K562 (cell line): ENCODE measurements at regions of chr5 and their contacts with region 1.

Region 1: DNA sequence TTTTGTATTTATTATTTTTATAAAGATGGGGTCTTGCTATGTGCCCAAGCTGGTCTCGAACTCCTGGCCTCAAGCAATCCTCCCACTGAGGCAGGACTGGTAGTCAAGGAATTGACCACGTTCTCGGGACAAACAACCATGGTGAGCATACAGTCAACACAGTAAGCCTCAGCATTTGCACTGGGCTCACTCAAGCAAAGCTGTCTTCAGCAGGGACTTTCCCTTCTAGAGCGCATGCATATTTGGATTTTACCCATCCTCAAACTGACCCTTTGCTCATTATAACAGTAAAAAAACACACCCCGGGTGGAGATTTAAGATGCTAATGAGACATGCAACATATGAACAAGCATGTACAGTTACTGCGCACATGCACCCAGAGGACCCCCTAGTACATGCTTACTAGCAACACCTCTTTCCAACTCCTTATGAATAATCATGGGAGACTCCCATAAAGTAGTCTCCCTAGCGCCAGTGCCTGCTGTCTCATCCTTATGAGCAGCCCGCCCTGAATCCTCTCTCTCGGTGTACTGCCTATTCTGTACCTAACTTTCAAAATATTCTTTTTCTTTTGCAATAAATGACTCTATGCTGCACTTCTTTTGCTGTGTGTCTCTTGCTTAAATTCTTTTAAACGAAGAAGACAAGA is 41.5 kb downstream of the C5orf22 start:
- DNase-seq: no peak
- ATAC-seq: no peak
- H3K4me3 ChIP-seq: no peak overlapping the region
- H3K27ac ChIP-seq: no peak overlapping the region
- H3K4me1 ChIP-seq: no peaks in the 10 kb centered on the region
- H3K27me3 ChIP-seq: peaks cover 9 to 17% of the 10 kb centered on the region in 2 experiments; a peak in 4 of 5 replicates
- CTCF ChIP-seq: no peak
- EP300 ChIP-seq: no peak
- POLR2A ChIP-seq: no peak
- RAD21 ChIP-seq: no peak

Region 2: GRCh38 chr5:31593387-31594092 is 19.9 kb after region 1 on chr5:
- CTCF ChIA-PET with region 1: no interaction called
- POLR2A ChIA-PET with region 1: no interaction called
- in situ Hi-C with region 1: no loop called
- intact Hi-C with region 1: loop called (anchors 2 kb)
- DNase-seq: no peak
- ATAC-seq: no peak
- H3K4me3 ChIP-seq: no peak overlapping the region
- H3K27ac ChIP-seq: no peak overlapping the region
- H3K4me1 ChIP-seq: no peaks in the 10 kb centered on the region
- H3K27me3 ChIP-seq: peaks cover 20 to 26% of the 10 kb centered on the region in 2 experiments; a peak in 4 of 5 replicates
- CTCF ChIP-seq: no peak
- EP300 ChIP-seq: no peak
- POLR2A ChIP-seq: no peak
- RAD21 ChIP-seq: no peak

Region 3: DNA sequence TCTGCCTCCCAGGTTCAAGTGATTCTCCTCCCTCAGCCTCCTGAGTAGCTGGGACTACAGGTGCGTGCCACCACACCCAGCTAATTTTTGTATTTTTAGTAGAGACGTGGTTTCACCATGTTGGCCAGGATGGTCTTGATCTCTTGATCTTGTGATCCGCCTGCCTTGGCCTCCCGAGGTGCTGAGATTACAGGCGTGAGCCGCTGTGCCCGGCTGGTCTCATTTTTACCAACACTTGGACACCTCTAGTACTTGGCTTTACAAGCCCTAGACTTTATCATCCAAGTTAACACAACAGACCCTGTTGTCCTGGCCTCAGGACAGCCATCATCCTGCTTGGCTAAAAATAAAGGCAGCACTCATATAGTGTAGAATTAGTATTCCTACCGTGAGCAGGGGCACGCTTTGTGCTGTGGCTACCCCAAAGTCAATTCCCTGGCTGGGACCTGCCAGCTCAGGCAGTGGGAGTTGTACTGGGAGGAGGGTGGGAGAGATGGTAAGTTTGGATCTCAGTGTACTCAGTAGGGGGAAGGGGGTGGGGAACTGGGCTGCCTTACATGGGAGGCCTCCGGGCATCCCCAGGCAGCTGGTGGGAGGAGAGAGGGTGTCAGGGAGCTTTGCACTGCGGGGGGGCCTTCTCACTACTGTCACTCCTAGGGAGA is 71.9 kb after region 1 on chr5:
- CTCF ChIA-PET with region 1: no interaction called
- POLR2A ChIA-PET with region 1: no interaction called
- in situ Hi-C with region 1: no loop called
- intact Hi-C with region 1: no loop called
- DNase-seq: no peak
- ATAC-seq: no peak
- H3K4me3 ChIP-seq: no peak overlapping the region
- H3K27ac ChIP-seq: no peak overlapping the region
- H3K4me1 ChIP-seq: no peaks in the 10 kb centered on the region
- H3K27me3 ChIP-seq: peaks cover 17 to 59% of the 10 kb centered on the region in 2 experiments
- CTCF ChIP-seq: no peak
- EP300 ChIP-seq: no peak
- POLR2A ChIP-seq: no peak
- RAD21 ChIP-seq: no peak

Region 4: DNA sequence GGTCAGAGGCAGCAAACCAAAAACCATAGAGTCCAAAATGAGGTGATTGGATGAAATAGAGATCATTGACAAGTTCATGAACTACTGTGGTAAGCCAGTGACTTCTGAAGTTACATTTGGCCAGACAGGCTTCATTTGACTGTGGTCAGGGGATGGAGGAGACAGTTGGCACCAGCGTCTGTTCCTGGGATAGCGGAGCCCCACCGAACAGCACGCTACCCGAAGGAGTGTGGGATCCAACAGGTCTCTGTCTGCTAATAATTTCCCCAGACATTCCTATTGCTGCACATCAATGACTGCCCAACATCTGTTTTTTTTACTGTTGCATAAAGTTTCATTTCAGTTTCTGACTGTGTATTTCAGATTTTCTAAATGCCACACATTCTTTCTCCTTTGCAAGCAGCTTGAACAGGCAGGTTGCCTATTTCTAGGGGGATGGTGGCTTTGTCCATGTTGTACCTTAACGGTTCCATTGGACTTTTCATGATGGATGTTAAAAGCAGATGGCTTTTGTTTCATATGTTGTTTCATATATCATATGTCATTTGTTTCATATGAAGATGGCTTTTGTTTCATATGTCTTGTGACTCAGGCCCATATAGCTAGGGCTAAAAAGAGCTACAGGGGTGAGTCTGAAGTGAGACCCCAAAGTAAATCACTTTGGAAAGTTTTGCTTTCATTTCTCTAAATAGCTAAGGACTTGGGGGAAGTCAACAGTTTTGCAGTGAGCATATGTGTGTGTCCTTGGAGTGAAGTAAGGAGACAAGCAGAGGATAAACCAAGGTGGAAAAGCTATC is 419.7 kb after region 1 on chr5:
- CTCF ChIA-PET with region 1: no interaction called
- POLR2A ChIA-PET with region 1: no interaction called
- in situ Hi-C with region 1: no loop called
- intact Hi-C with region 1: no loop called
- DNase-seq: no peak
- ATAC-seq: no peak
- H3K4me3 ChIP-seq: no peak overlapping the region
- H3K27ac ChIP-seq: no peak overlapping the region
- H3K4me1 ChIP-seq: no peaks in the 10 kb centered on the region
- H3K27me3 ChIP-seq: peaks cover 40 to 49% of the 10 kb centered on the region in 2 experiments
- CTCF ChIP-seq: no peak
- EP300 ChIP-seq: no peak
- POLR2A ChIP-seq: no peak
- RAD21 ChIP-seq: no peak